Aorta (tissue), 5 donors: ENCODE measurements at regions of chr1 and their contacts with region 1.

Region 1: DNA sequence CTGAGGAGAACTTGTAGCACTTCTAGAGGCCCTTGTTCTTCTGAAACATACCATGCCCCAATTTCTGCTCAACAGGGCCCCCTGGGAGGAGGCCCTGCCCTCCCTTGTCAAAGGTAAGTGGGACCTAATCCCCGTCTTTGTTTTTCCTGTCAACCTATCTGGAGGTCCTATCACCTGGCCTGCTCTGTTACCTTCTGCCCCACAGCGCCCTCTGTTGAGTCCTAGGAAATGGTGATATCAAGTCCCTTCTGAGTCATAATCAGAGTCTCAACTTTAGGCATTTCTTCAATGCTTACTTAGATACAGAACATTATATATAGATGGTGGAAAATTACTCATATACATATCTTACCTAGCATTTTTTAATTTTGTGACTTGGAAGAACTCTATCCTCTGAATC is 28.2 kb upstream of the FCRL4 start:
- DNase-seq: no peak
- ATAC-seq: no peak
- H3K4me3 ChIP-seq: no peak overlapping the region
- H3K27ac ChIP-seq: no peak overlapping the region
- H3K4me1 ChIP-seq: no peaks in the 10 kb centered on the region
- H3K27me3 ChIP-seq: peaks cover 0 to 3% of the 10 kb centered on the region in 2 donors

Region 2: DNA sequence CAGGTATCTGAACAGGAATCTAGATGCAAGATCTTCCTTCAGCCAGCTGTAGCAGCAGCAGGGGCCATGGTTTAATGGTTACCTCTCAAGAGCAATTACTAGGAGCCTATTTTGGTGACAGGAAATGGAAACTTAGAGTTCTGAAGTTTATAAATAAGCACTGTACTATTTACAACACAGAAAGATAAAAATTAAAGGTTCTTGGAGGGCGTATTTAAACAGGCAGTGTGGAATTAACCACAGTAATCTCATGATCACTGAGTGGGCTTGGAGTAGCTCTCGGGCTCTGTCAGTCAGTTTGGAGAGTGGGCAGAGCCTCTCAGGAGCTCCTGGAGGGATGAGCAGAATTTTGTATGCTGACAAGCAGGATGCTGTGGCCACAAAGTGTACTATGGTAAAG is 63.6 kb before region 1 on chr1:
- intact Hi-C with region 1: loop called in 1 of 2 experiments (anchors 10 kb)
- DNase-seq: no peak
- ATAC-seq: no peak
- H3K4me3 ChIP-seq: no peak overlapping the region
- H3K27ac ChIP-seq: no peak overlapping the region
- H3K4me1 ChIP-seq: no peaks in the 10 kb centered on the region
- H3K27me3 ChIP-seq: peaks cover 0 to 2% of the 10 kb centered on the region in 2 donors